Activated naive CD4-positive, alpha-beta T cell treated with anti-CD3 and anti-CD28 coated beads for 36 hours (primary cell): ENCODE measurements at regions of chr2 and their contacts with region 1.

Region 1: GRCh38 chr2:26503231-26503880 is 25.4 kb upstream of the OTOF start:
- DNase-seq: peak; percentile 92
- H3K4me3 Mint-ChIP-seq: peak overlapping the region; percentile 73
- H3K27ac Mint-ChIP-seq: no peak overlapping the region
- H3K4me1 Mint-ChIP-seq: peaks cover 6% of the 10 kb centered on the region
- H3K27me3 Mint-ChIP-seq: no peaks in the 10 kb centered on the region

Region 2: GRCh38 chr2:26059542-26059941 is 443.8 kb before region 1 on chr2:
- CTCF ChIA-PET with region 1: no interaction called
- intact Hi-C with region 1: no loop called
- DNase-seq: no peak
- H3K4me3 Mint-ChIP-seq: no peak overlapping the region
- H3K27ac Mint-ChIP-seq: no peak overlapping the region
- H3K4me1 Mint-ChIP-seq: peaks cover 41% of the 10 kb centered on the region
- H3K27me3 Mint-ChIP-seq: no peaks in the 10 kb centered on the region

Region 3: DNA sequence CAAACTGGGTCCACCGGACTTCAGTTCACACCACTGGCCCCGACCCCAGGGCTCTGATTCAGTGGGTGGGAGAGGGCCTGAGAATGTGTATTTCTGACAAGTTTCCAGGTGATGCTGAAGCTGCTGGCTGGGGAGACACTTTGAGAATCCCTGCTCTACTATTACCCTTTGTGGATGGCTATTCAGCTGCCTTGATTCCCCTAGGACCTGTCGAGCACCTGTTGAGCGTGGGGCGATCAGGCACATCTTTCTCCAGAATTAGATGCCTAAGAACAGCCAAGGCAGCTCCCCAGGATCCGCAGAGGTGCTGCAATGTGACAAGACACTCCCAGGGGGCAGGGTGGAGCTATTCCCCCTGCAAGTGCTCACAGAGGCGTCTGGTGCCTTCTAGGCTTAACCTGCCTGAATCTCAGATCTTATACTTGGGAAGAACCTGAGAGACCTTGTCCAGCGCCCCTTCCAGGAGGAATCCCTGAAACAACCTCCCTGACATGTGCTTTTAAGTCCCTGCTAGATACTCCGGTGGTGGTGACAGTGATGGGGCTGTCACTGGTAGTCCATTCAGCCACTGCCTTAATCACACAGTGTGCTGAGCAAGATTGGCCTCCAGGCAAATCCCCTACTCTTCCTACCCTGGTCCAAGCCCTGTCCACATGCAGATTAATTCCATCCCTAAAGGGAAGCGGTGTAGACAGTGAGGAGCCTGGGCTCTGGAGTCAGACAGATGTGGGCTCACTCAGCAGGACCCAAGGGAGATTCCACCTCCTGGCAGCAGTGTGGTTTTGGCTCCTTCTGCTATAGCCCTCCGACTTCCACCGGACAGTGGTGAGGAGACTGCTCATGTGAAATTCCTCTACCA is 17.9 kb after region 1 on chr2:
- CTCF ChIA-PET with region 1: interaction called, 24 read pairs
- intact Hi-C with region 1: no loop called
- DNase-seq: peak; percentile 12
- H3K4me3 Mint-ChIP-seq: no peak overlapping the region
- H3K27ac Mint-ChIP-seq: no peak overlapping the region
- H3K4me1 Mint-ChIP-seq: peaks cover 23% of the 10 kb centered on the region
- H3K27me3 Mint-ChIP-seq: no peaks in the 10 kb centered on the region

Region 4: DNA sequence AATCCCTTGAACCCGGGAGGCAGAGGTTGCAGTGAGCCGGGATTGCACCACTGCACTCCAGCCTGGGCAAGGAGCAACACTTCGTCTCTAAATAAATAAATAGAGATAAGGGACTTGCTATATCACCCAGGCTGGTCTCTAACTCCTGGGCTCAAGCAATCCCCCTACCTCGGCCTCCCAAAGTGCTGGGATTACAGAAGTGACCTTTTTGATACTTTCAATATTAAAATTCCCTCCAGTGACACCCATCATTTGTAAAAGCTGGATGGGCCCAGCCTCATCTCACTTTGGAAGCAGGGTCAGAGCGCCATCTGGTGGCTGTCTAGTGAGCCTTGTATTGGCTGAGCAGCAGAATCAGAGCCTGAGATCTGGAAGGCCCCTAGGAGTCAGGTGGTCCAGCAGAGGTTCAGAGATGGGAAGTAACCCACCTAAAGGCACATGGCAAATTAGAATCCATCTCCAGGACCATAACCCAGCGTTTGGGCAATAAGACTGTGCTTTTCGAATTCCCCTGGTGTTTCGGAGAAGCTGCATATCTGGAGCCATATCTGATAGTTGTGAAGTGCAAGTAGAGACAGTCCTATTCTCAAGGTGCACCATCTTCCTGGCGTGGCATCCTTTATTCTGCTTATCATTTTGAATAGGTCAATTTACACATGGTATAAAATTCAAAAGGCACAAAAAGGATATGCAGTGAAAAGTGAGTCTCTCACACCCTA is 242.4 kb after region 1 on chr2:
- CTCF ChIA-PET with region 1: no interaction called
- intact Hi-C with region 1: loop called (anchors 1 kb)
- DNase-seq: peak; percentile 92
- H3K4me3 Mint-ChIP-seq: no peak overlapping the region
- H3K27ac Mint-ChIP-seq: no peak overlapping the region
- H3K4me1 Mint-ChIP-seq: no peaks in the 10 kb centered on the region
- H3K27me3 Mint-ChIP-seq: no peaks in the 10 kb centered on the region